CD4-positive, alpha-beta T cell (primary cell): ENCODE measurements at regions of chr17 and their contacts with region 1.

Region 1: GRCh38 chr17:67421869-67422273 is 44.8 kb downstream of the PITPNC1 start:
- DNase-seq: peak in 11 of 14 experiments; percentile 22 to 94 (median 61)
- ATAC-seq: peak; percentile 93
- H3K4me3 ChIP-seq: no peak overlapping the region
- H3K4me3 Mint-ChIP-seq: peak overlapping the region; percentile 16
- H3K27ac ChIP-seq: peak overlapping the region; percentile 68 to 88
- H3K27ac Mint-ChIP-seq: peak overlapping the region; percentile 87
- H3K4me1 ChIP-seq: peaks cover 80% of the 10 kb centered on the region
- H3K4me1 Mint-ChIP-seq: peaks cover 90% of the 10 kb centered on the region
- H3K27me3 ChIP-seq: no peaks in the 10 kb centered on the region
- H3K27me3 Mint-ChIP-seq: no peaks in the 10 kb centered on the region
- CTCF ChIP-seq: no peak

Region 2: GRCh38 chr17:67390646-67391384 is 31.1 kb before region 1 on chr17:
- CTCF ChIA-PET with region 1: interaction called, 4 read pairs
- POLR2A ChIA-PET with region 1: interaction called, 4 read pairs
- intact Hi-C with region 1: loop called in 1 of 2 experiments (anchors 5 kb)
- DNase-seq: peak; percentile 39 to 83 (median 60)
- ATAC-seq: peak; percentile 82
- H3K4me3 ChIP-seq: peak overlapping the region; percentile 20
- H3K4me3 Mint-ChIP-seq: peak overlapping the region; percentile 86
- H3K27ac ChIP-seq: peak overlapping the region; percentile 50 to 55
- H3K27ac Mint-ChIP-seq: peak overlapping the region; percentile 92
- H3K4me1 ChIP-seq: peaks cover 56% of the 10 kb centered on the region
- H3K4me1 Mint-ChIP-seq: peaks cover 78% of the 10 kb centered on the region
- H3K27me3 ChIP-seq: no peaks in the 10 kb centered on the region
- H3K27me3 Mint-ChIP-seq: no peaks in the 10 kb centered on the region
- CTCF ChIP-seq: no peak

Region 3: GRCh38 chr17:67400193-67400592 is 21.7 kb before region 1 on chr17:
- CTCF ChIA-PET with region 1: no interaction called
- POLR2A ChIA-PET with region 1: interaction called, 10 read pairs
- intact Hi-C with region 1: loop called (anchors 1 to 2 kb)
- DNase-seq: peak in 4 of 14 experiments; percentile 34 to 72 (median 60)
- ATAC-seq: peak; percentile 50
- H3K4me3 ChIP-seq: no peak overlapping the region
- H3K4me3 Mint-ChIP-seq: peak overlapping the region; percentile 65
- H3K27ac ChIP-seq: peak overlapping the region; percentile 31 to 77
- H3K27ac Mint-ChIP-seq: peak overlapping the region; percentile 99
- H3K4me1 ChIP-seq: peaks cover 52% of the 10 kb centered on the region
- H3K4me1 Mint-ChIP-seq: peaks cover 77% of the 10 kb centered on the region
- H3K27me3 ChIP-seq: no peaks in the 10 kb centered on the region
- H3K27me3 Mint-ChIP-seq: no peaks in the 10 kb centered on the region
- CTCF ChIP-seq: no peak